ENCODE measurements at regions of chr5 and their contacts with region 1.

Region 1: DNA sequence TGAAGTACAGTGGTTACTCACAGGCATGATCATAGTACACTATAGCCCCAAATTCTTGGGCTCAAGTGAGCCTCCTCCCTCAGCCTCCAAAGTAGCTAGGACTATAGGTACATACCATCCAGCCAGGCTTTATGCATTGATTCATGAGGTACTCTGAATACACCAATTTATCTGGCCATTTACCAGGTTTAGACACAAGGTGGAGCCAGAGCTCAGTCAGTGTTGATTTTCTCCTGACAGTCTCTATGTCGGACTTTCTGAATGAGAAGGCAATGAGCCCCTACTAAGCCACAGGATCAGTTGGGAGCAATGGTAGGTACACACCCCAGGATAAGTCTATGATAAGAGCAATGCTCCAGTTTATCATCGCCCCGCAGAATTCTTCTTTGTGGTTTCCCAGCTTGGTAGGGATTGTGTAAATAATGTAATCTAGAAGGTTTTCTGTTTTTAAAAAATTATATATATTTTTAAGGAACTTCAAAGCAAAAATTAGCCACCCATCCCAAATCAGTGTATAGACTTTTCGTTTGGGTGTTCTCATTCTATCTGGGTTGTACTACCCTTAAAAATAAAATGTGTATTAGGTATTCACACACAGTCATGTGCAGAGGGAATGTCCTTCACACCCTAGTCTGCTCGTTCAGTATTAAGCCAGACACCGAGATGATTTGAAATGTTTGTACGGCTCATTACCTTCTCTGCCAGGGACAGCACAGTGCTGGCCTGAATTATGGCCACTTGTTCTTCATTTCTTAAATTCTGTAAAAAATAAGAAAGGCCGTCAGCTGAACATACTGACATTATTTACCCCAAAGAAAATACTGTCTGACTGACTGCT is 118.4 kb upstream of the DPYSL3 start:
- DNase-seq: peak; percentile 2
- H3K4me3 ChIP-seq: no peak overlapping the region
- H3K27me3 ChIP-seq: no peaks in the 10 kb centered on the region
- CTCF ChIP-seq: peak; percentile 83

Region 2: GRCh38 chr5:147617191-147617606 is 11.1 kb before region 1 on chr5:
- CTCF ChIA-PET with region 1: interaction called, 12 read pairs
- POLR2A ChIA-PET with region 1: no interaction called
- DNase-seq: no peak
- H3K4me3 ChIP-seq: no peak overlapping the region
- H3K27me3 ChIP-seq: no peaks in the 10 kb centered on the region
- CTCF ChIP-seq: no peak

Region 3: DNA sequence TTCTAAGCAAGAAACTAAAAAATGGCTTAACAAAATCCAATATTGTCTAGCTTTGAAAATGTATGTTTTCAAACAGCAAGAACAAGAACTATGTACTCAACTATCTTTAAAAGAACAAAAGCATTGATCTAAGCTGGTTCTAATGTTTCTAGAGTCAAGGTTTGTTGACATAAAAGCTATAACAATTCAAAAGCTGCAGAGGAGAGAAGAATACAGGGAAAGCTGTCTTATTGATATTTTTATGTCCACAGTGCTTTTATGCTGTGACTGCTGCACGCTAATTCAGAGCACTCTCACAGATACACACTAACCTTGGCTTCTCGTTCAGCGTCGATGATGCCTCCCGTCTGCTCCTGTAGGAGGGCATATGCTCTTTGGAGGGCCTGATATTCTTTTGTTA is 11.0 kb after region 1 on chr5:
- CTCF ChIA-PET with region 1: interaction called, 31 read pairs
- POLR2A ChIA-PET with region 1: no interaction called
- DNase-seq: no peak
- H3K4me3 ChIP-seq: no peak overlapping the region
- H3K27me3 ChIP-seq: no peaks in the 10 kb centered on the region
- CTCF ChIP-seq: no peak

Region 4: DNA sequence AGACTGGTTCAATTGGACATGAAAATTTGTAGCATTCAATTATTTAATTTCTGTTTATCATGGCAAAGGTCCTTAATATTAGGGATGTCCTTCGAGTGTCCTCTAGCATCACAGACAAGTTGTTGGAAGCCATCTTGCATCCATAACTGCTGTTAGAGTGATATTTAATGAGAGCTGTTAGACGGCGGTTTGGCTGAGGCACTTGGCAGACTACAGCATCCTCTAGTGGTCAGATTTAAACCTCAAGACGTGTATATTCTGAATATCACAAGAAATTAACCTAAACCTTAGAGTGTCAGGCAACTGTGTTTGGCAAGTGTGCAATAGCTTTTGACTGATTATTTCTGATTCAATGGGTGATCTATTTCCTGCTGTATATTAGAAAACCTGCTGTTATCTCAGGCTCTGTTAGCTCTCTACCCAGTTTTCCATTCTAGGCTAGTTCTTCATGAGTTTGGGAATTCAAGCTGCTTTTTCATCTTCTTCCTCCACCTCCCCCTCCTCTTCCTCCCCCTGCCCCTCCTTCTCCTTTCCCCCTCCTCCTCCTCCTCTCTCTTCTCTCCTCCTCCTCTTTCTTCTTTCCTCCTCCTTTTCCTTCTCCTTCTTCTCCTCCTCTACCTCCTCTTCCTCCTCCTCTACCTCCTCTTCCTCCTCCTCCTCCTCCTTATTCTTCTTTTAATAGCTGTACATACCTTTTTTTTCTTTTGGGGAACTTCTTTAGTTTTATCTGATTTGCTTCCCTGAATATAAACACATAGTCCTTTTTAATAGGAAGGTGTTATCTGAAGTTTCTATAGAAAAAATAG is 194.6 kb after region 1 on chr5:
- CTCF ChIA-PET with region 1: interaction called, 79 read pairs
- POLR2A ChIA-PET with region 1: no interaction called
- DNase-seq: peak; percentile 11
- H3K4me3 ChIP-seq: no peak overlapping the region
- H3K27me3 ChIP-seq: no peaks in the 10 kb centered on the region
- CTCF ChIP-seq: peak; percentile 88